AG04450 (cell line): ENCODE measurements at regions of chr9 and their contacts with region 1.

Region 1: GRCh38 chr9:130243015-130243734 is 22.4 kb upstream of the HMCN2 start:
- DNase-seq: peak; percentile 15
- H3K4me3 ChIP-seq: peak overlapping the region; percentile 7; the same call in 1 of the 2 replicates
- H3K27ac ChIP-seq: no peak overlapping the region
- H3K27me3 ChIP-seq: peaks cover 1% of the 10 kb centered on the region
- CTCF ChIP-seq: peak; percentile 88

Region 2: GRCh38 chr9:130107234-130107861 is 135.8 kb before region 1 on chr9:
- CTCF ChIA-PET with region 1: interaction called, 112 read pairs
- POLR2A ChIA-PET with region 1: no interaction called
- DNase-seq: peak; percentile 74
- H3K4me3 ChIP-seq: no peak overlapping the region
- H3K27ac ChIP-seq: peak overlapping the region; percentile 35
- H3K27me3 ChIP-seq: no peaks in the 10 kb centered on the region
- CTCF ChIP-seq: peak; percentile 84

Region 3: DNA sequence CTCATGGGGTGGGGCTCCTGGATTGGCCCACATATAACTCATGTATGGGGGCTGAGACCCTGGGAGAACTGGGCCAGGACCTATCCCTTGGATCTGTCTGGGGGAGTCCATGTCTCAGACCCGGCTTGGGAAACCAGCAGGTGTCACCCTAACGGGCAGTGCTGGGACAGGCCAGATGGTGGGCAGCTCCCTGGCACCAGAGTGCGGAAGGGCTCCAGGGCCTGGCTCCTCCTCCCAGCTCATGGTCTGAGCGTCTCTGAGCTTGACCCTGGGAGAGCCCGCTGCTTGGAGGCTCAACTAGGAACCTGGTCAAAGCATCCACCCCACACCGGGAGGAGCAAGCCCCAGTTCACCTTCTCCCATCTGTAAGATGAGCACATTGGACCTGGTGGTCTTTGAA is 86.5 kb before region 1 on chr9:
- CTCF ChIA-PET with region 1: interaction called, 12 read pairs
- POLR2A ChIA-PET with region 1: no interaction called
- DNase-seq: no peak
- H3K4me3 ChIP-seq: no peak overlapping the region
- H3K27ac ChIP-seq: no peak overlapping the region
- H3K27me3 ChIP-seq: no peaks in the 10 kb centered on the region
- CTCF ChIP-seq: no peak

Region 4: GRCh38 chr9:130220352-130220751 is 22.8 kb before region 1 on chr9:
- CTCF ChIA-PET with region 1: interaction called, 10 read pairs
- POLR2A ChIA-PET with region 1: no interaction called
- DNase-seq: peak; percentile 46
- H3K4me3 ChIP-seq: no peak overlapping the region
- H3K27ac ChIP-seq: peak overlapping the region; percentile 47
- H3K27me3 ChIP-seq: no peaks in the 10 kb centered on the region
- CTCF ChIP-seq: peak; percentile 61

Region 5: DNA sequence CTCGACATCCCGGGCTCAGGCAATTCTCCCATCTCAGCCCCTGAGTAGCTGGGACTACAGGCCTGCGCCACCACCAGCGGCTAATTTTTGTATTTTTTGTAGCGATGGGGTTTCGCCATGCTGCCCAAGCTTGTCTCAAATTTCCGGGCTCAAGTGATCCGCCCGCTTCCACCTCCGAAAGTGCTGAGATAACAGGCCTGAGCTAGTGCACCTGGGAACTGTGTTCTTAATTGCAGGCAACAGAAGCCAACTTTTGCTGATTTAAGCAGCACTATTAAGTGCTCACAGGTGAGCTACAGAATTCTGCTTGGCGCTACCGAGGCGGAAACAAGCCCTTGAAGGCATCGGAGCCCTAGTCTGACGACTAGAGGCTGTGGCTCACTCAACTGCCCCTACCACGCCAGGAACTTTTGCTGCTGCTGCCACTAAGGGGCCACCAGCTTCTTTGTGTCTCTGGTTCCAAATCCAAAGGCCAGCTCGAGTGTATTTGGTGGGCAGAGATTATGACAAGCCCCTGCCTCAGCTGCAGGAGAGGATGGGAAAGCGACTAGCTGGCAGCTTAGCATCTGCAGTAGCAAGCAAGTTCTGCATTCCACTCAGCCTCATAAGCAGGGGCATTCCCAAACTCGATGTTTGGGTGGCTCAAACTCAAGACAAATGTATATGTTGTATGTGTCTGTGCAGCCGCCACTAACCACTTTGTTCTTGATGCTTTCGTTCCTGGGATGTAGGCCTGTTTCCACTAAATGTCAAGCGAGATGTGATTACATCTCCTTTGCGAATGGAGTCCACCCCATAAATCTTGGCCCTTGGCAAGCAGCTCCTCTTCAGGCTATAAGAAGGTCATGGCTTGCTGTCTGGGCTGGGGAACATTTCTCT is 11.8 kb after region 1 on chr9:
- CTCF ChIA-PET with region 1: interaction called, 16 read pairs
- POLR2A ChIA-PET with region 1: no interaction called
- DNase-seq: no peak
- H3K4me3 ChIP-seq: no peak overlapping the region
- H3K27ac ChIP-seq: no peak overlapping the region
- H3K27me3 ChIP-seq: peaks cover 31% of the 10 kb centered on the region
- CTCF ChIP-seq: no peak

Region 6: GRCh38 chr9:130260816-130261765 is 17.9 kb after region 1 on chr9:
- CTCF ChIA-PET with region 1: interaction called, 16 read pairs
- POLR2A ChIA-PET with region 1: no interaction called
- DNase-seq: no peak
- H3K4me3 ChIP-seq: no peak overlapping the region
- H3K27ac ChIP-seq: no peak overlapping the region
- H3K27me3 ChIP-seq: peaks cover 62% of the 10 kb centered on the region
- CTCF ChIP-seq: no peak